ENCODE measurements at regions of chr2 and their contacts with region 1.

Region 1: GRCh38 chr2:177348733-177349693 is 43.6 kb upstream of the AGPS start:
- DNase-seq: no peak
- ATAC-seq: no peak

Region 2: DNA sequence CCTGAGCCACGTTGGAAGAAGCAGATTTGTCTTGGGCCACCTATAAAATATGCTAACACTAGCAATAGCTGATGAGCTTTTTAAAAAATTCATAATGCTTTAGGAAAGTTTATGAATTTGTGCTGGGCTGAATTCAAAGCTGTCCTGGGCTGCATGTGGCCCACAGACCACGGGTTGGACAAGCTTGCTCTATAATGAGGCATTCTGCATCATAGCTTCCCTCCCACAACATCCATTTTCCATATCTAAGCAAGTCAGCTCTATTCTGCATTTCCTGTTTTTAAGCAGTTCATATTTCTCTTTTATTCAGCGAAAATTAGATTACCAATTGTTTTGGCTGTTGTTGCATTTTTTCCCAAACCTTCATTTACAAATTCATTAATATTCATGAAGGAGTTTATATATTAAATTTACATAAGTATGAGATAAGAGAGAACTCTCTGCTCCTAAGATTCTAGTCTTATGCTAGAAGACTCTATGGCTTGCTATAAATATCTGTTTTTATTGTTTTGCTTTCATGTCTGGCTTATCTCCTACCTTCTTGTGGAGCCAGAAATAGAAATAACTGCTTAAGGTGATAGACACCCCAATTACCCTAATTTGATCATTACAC is 250.9 kb before region 1 on chr2:
- intact Hi-C with region 1: no loop called
- DNase-seq: no peak
- ATAC-seq: no peak

Region 3: DNA sequence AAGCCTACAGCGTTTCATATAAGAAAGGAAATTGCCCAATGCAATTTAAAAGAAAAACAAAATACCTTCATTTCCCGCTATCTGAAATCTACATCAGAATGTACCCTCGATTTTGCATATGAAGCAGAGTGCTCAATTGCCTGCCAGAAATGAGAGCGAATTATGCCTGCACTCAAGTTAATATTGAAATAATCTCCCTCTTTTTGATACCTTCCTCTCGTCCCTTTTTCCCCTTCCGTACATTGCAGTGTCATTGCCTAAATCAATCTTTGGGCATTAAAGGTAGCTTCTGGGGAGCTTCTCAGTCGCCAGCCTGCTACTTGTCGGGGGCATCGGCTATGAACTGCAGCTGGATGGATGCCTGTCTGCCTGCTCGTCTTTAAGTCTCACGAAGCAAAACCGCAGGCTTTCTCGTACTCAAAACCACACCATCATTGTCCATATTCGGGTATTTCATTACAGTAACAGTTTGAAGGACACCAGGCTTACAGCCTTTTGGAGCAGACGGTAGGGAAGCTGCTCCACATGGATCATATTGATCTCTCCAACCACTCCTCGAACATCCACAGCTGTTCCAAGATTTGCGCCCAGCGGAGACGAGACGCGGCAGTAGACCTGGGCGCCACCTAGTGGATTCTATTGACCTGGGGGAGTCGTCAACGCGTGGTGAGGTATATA is 200.4 kb before region 1 on chr2:
- intact Hi-C with region 1: no loop called
- DNase-seq: peak; percentile 79
- ATAC-seq: peak; percentile 87 to 93

Region 4: DNA sequence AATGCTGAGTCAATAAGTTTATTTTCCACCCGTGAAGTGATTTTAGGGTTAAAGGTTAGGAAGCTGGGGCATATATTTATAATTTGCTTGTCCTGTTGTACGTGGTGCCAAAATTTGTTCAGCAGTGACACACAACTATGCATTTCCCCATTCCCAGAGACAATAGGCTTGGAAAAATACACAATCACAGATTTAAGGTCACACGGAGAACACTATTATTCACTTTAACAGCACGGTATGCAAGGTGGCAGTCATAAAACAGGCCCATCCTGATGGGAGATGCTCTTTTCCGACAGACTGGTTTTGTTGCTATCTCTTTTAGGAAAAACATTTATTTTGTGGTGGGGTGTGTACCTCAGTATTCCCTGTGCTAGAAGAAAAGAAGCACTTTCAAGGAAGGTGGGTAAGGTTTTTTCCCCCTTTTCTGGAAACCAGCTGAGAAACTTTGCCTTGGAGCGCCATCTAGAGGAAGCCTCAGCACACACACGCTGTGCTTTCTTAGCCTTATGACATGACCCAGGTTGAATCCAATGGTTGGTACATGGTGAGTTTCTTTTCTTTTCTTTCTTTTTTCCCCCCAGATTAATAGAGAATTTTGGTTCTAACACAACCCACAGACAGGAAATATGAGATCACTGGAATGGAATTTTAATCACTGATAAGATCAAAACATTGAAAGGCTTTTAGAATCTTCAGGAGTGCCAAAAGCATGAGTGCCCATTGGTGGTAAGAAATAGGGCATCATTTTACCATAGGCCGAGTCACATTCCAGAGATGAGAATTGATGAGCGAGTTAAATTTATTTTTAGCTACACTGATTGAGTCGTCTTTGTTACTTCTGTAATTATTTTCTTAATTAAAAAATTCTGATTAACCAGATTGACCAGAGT is 375.6 kb after region 1 on chr2:
- intact Hi-C with region 1: loop called in 1 of 2 experiments (anchors 10 kb)
- DNase-seq: peak; percentile 41
- ATAC-seq: peak; percentile 66 to 71

Measured in left cardiac atrium (tissue), 4 donors.